Psoas muscle (tissue), 8 donors: ENCODE measurements at regions of chr15 and their contacts with region 1.

Region 1: GRCh38 chr15:85494048-85494793 is 113.8 kb downstream of the AKAP13 start:
- DNase-seq: no peak
- ATAC-seq: peak; percentile 64 to 78 (median 71)
- H3K4me3 ChIP-seq: no peak overlapping the region
- H3K27ac ChIP-seq: no peak overlapping the region
- H3K4me1 ChIP-seq: peaks cover 15% of the 10 kb centered on the region
- H3K27me3 ChIP-seq: no peaks in the 10 kb centered on the region
- CTCF ChIP-seq: no peak

Region 2: DNA sequence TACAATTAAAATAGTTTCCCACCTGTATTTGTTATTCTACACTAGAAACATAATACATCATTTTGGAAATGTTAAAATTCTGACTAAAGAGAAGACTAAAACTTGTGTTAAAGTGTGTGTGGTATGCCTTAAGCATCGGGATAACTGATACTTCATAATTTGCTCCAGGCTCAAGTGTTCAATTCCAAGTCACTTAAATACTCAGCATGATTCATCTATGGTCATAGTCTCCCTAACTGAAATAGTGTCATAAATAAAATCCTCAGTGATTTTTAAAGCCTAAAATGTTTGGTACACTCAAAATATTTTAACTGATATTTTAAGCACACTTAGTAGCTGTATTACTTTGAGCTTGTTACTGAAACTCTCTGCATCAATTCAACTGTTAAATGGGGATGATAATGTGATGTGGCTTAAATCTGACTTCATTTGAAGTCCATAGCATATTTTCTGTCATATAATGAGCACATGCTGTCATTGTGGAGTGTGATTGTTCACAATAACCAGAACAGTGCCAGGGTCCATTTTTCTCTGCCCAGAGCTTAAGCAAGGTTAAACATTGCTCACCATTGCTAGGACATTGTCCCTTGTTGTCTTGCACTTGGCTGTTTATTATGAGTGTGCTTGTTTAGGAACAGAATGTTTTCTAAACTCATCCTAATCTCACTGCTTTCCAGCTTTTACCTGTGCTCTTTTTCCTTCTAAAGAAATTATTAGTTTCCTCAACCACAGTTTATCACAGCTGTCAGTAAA is 178.3 kb after region 1 on chr15:
- intact Hi-C with region 1: loop called in 1 of 2 experiments (anchors 10 kb)
- DNase-seq: no peak
- ATAC-seq: peak; percentile 50 to 83 (median 62)
- H3K4me3 ChIP-seq: no peak overlapping the region
- H3K27ac ChIP-seq: peak overlapping the region; percentile 46
- H3K4me1 ChIP-seq: peaks cover 17% of the 10 kb centered on the region
- H3K27me3 ChIP-seq: no peaks in the 10 kb centered on the region
- CTCF ChIP-seq: no peak